Heart right ventricle (tissue), 16 donors: ENCODE measurements at regions of chr6 and their contacts with region 1.

Region 1: GRCh38 chr6:73285674-73286283 is 22.8 kb upstream of the KHDC1 start:
- DNase-seq: no peak
- ATAC-seq: peak in 2 of 8 donors; percentile 29 to 38
- H3K4me3 ChIP-seq: no peak overlapping the region
- H3K27ac ChIP-seq: no peak overlapping the region
- H3K4me1 ChIP-seq: no peaks in the 10 kb centered on the region
- H3K27me3 ChIP-seq: no peaks in the 10 kb centered on the region
- CTCF ChIP-seq: peak in 7 of 9 donors; percentile 17 to 59 (median 43)

Region 2: GRCh38 chr6:73329201-73329600 is 43.4 kb after region 1 on chr6:
- intact Hi-C with region 1: loop called in 5 of 10 experiments (anchors 2 to 5 kb)
- DNase-seq: no peak
- ATAC-seq: no peak
- H3K4me3 ChIP-seq: no peak overlapping the region
- H3K27ac ChIP-seq: no peak overlapping the region
- H3K4me1 ChIP-seq: no peaks in the 10 kb centered on the region
- H3K27me3 ChIP-seq: peaks cover 0 to 43% (median 22%) of the 10 kb centered on the region in 7 donors
- CTCF ChIP-seq: no peak

Region 3: DNA sequence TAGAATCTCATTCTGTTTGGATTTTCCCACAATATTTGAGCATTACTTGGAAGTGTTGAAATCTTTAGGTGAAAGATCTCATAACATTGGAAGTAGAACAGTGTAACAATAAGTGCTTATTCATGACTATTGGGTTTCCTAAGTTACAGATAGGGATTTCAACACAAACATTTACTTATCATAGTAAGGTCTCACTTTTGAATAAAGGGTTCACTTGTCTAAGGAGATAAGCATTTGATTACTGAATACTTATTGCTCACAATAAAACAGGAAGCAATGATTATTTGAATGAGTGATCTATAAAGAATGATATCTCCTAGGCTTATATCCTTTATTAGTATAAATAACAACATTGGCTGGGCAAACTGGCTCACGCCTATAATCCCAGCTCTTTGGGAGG is 123.6 kb after region 1 on chr6:
- intact Hi-C with region 1: no loop called
- DNase-seq: no peak
- ATAC-seq: no peak
- H3K4me3 ChIP-seq: no peak overlapping the region
- H3K27ac ChIP-seq: no peak overlapping the region
- H3K4me1 ChIP-seq: no peaks in the 10 kb centered on the region
- H3K27me3 ChIP-seq: no peaks in the 10 kb centered on the region
- CTCF ChIP-seq: no peak